IMR-90 (cell line): ENCODE measurements at regions of chr13 and their contacts with region 1.

Region 1: GRCh38 chr13:36282818-36283445 is 14.7 kb downstream of the CCDC169 start:
- DNase-seq: peak; percentile 57
- ATAC-seq: peak; percentile 71
- H3K4me3 ChIP-seq: no peak overlapping the region
- H3K27ac ChIP-seq: no peak overlapping the region
- H3K4me1 ChIP-seq: no peaks in the 10 kb centered on the region
- H3K27me3 ChIP-seq: no peaks in the 10 kb centered on the region; the same call in none of the 2 replicates
- CTCF ChIP-seq: peak; percentile 95
- POLR2A ChIP-seq: no peak
- RAD21 ChIP-seq: peak; percentile 89

Region 2: GRCh38 chr13:36395280-36395679 is 112.3 kb after region 1 on chr13:
- CTCF ChIA-PET with region 1: interaction called, 18 read pairs
- POLR2A ChIA-PET with region 1: interaction called, 5 read pairs
- dilution Hi-C with region 1: no loop called
- in situ Hi-C with region 1: no loop called
- intact Hi-C with region 1: loop called (anchors 1 kb)
- DNase-seq: peak; percentile 66
- ATAC-seq: peak; percentile 93
- H3K4me3 ChIP-seq: no peak overlapping the region
- H3K27ac ChIP-seq: no peak overlapping the region
- H3K4me1 ChIP-seq: no peaks in the 10 kb centered on the region
- H3K27me3 ChIP-seq: peaks cover 2% of the 10 kb centered on the region; the same call in 1 of the 2 replicates
- CTCF ChIP-seq: peak; percentile 71
- POLR2A ChIP-seq: no peak
- RAD21 ChIP-seq: peak; percentile 60

Region 3: DNA sequence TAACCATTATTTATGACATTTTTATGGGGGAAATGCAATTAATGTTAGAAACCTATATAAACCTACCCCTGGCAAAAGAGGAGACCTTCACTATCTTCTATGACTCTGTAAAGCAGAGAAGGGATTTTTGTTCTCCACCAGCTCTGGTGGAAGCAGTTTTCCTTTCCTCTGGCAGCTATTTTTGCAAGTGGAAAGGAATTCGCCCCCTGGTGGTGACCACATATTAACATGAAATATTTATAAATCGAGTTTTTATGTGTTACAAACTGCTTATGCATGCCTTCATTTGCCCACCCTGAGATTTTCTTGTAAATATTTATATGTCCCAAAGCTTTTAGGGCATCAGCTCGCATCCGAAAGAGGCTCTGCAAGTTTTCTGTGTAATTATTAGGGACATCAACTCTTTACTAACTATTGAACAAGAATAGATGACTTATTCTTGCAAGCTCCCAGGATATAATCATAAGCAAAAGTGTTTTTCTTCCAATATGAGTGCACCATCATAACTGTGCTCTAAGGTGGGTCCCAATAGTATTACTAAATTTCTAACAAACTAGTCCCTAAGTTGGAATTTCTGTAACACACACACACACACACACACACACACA is 453.3 kb after region 1 on chr13:
- CTCF ChIA-PET with region 1: interaction called, 5 read pairs
- POLR2A ChIA-PET with region 1: no interaction called
- dilution Hi-C with region 1: no loop called
- in situ Hi-C with region 1: loop called (anchors 10 kb)
- intact Hi-C with region 1: loop called (anchors 1 kb)
- DNase-seq: peak; percentile 62
- ATAC-seq: peak; percentile 74
- H3K4me3 ChIP-seq: no peak overlapping the region
- H3K27ac ChIP-seq: no peak overlapping the region
- H3K4me1 ChIP-seq: no peaks in the 10 kb centered on the region
- H3K27me3 ChIP-seq: peaks cover 2% of the 10 kb centered on the region; the same call in 1 of the 2 replicates
- CTCF ChIP-seq: peak; percentile 64
- POLR2A ChIP-seq: no peak
- RAD21 ChIP-seq: peak; percentile 60

Region 4: DNA sequence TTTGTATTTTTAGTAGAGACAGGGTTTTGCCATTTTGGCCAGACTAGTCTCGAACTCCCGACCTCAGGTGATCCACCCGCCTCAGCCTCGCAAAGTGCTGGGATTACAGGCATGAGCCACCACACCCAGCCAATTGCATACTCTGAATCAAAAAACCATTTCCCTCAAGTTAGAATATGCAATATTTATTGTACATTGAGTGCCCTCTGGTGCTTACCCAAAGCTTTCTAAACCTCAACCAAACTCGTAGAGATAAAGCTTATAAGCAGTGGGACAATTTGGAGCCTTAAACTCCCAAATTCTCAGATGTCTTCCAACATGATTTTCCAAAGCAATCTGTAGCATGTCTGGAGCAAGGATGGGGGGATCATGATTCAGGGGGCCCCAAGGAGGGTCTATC is 558.5 kb after region 1 on chr13:
- CTCF ChIA-PET with region 1: no interaction called
- POLR2A ChIA-PET with region 1: no interaction called
- dilution Hi-C with region 1: no loop called
- in situ Hi-C with region 1: no loop called
- intact Hi-C with region 1: loop called (anchors 2 kb)
- DNase-seq: no peak
- ATAC-seq: no peak
- H3K4me3 ChIP-seq: no peak overlapping the region
- H3K27ac ChIP-seq: no peak overlapping the region
- H3K4me1 ChIP-seq: no peaks in the 10 kb centered on the region
- H3K27me3 ChIP-seq: no peaks in the 10 kb centered on the region
- CTCF ChIP-seq: peak; percentile 17; the same call in 1 of the 2 replicates
- POLR2A ChIP-seq: no peak
- RAD21 ChIP-seq: no peak